Ascending aorta (tissue), 2 donors: ENCODE measurements at regions of chr4 and their contacts with region 1.

Region 1: DNA sequence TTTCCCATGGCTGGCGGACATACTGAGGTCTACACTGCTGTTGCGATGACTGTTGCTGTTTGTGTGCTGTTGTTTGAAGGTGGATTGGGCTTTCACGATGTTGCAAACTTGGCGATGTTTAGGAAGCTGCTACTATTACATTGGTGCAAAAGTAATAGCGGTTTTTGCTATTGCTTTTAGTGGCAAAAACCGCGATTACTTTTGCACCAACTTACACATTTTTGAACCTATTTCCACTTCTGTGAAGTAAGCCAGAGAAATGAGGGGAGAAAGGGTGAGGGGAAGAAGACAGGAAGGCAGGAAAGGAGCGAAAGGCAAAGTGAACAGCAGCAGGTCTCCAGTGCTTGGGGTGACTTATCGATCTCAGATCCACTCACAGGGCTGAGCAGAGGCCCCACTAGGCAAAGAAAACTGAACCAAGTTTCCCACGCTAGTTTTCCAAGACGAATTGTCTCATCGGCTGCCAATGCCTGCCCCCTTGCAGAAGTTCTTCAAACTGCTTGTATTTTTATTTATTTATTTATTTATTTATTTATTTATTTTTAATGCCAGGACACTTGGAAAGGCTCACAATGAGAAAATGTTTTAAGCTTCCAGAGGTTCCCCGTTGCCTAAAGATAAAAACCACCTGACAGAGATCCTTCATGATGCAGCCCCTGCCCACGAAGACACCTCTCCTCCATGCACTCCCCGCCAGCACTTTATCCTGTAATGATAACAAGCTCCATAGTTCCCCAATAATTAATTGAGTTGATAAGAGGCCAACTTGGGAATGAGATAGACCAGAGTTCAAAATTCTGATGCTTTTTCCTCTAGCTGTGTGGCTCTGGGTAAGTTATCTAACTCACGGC is 43.3 kb downstream of the QDPR start:
- DNase-seq: no peak
- H3K4me3 ChIP-seq: no peak overlapping the region
- H3K27ac ChIP-seq: no peak overlapping the region
- H3K4me1 ChIP-seq: no peaks in the 10 kb centered on the region
- H3K27me3 ChIP-seq: no peaks in the 10 kb centered on the region
- CTCF ChIP-seq: peak in 2 of 3 experiments; percentile 41 to 49

Region 2: DNA sequence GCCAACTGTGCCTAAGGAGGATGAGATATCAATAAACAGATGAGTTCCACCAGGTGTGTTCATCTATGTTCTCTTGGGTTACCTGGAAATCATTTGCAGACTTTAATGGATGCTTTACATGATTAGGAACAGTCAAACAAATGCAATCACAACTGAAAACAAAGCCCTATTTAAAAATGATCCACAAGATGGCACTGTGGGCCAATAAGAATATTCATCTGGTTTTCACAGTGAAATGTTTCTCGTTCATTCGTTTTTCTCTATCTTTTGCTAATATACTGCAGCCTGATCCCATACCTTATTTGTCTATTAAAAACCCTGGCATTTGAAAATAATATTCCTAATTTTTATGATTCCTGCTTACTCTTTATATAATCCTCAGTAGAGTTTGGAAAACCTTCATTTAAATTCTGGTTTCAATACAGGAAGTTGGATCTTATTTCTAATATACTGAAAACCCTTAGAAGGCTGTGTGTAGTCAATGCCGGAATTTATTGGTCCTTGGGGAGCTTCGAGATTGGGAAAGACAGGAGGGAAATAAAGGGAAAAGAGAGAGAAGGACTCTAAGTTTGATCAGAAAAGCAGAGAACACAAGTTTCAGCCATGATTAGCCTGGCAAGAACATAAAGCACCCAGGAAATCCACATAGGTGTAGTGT is 1178.6 kb before region 1 on chr4:
- intact Hi-C with region 1: loop called (anchors 2 kb)
- DNase-seq: no peak
- H3K4me3 ChIP-seq: no peak overlapping the region
- H3K27ac ChIP-seq: no peak overlapping the region
- H3K4me1 ChIP-seq: no peaks in the 10 kb centered on the region
- H3K27me3 ChIP-seq: no peaks in the 10 kb centered on the region
- CTCF ChIP-seq: peak in 2 of 3 experiments; percentile 47 to 63

Region 3: GRCh38 chr4:17347445-17347844 is 121.2 kb before region 1 on chr4:
- intact Hi-C with region 1: loop called (anchors 5 kb)
- DNase-seq: no peak
- H3K4me3 ChIP-seq: no peak overlapping the region
- H3K27ac ChIP-seq: no peak overlapping the region
- H3K4me1 ChIP-seq: no peaks in the 10 kb centered on the region
- H3K27me3 ChIP-seq: no peaks in the 10 kb centered on the region
- CTCF ChIP-seq: peak in 2 of 3 experiments; percentile 7 to 46

Region 4: GRCh38 chr4:17981063-17981462 is 512.5 kb after region 1 on chr4:
- intact Hi-C with region 1: no loop called
- DNase-seq: no peak
- H3K4me3 ChIP-seq: no peak overlapping the region
- H3K27ac ChIP-seq: no peak overlapping the region
- H3K4me1 ChIP-seq: no peaks in the 10 kb centered on the region
- H3K27me3 ChIP-seq: no peaks in the 10 kb centered on the region
- CTCF ChIP-seq: no peak